ENCODE measurements at regions of chr11 and their contacts with region 1.

Region 1: DNA sequence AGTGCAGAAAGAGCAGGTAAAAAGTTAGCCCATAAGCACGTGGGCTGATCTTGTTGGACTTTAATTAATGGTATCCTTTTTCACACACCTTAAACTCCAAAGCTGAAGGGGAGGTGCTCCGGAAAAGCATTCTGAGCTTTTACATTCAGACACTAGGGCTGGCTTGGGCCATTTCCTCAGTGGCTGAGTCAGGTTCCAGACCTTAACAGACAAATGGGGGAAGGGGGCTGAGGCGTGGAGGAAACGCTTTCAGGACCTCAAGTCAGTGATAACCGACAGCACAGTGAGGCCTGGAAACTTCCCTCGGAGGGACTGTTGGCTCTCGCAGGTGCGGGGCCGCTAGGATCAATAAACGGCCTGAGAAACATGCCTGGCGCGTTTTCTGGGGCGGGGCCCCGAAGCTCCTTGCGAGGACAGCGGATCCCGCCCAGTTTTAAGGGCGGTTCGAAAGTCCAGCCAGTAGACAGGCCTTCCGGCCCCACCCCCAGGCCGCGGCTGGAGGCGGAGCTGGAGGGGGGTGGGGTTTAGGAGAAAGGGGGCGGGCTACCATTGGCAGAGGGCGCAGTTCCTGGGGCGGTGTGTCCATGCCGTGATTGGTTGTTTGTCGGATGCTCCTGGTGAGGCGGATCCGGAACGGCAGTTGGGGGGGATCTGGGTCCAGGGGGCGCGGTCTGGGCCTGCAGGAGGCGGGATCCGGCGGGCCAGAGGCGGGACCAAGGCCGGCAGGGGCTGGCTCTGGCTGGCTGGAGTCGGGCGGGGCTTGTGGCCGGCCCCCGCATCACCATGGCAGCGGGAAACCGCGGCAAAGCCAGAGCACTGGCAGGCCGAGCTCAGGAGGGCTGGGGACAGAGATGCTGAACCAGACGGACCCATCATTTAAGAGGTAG is 8.0 kb downstream of the C11orf52 start:
- DNase-seq: peak; percentile 99
- CTCF ChIP-seq: no peak

Region 2: GRCh38 chr11:111911563-111912401 is 15.0 kb before region 1 on chr11 and contains the start of gene CRYAB:
- CTCF ChIA-PET with region 1: interaction called, 16 read pairs
- POLR2A ChIA-PET with region 1: no interaction called
- DNase-seq: no peak
- CTCF ChIP-seq: no peak

Region 3: DNA sequence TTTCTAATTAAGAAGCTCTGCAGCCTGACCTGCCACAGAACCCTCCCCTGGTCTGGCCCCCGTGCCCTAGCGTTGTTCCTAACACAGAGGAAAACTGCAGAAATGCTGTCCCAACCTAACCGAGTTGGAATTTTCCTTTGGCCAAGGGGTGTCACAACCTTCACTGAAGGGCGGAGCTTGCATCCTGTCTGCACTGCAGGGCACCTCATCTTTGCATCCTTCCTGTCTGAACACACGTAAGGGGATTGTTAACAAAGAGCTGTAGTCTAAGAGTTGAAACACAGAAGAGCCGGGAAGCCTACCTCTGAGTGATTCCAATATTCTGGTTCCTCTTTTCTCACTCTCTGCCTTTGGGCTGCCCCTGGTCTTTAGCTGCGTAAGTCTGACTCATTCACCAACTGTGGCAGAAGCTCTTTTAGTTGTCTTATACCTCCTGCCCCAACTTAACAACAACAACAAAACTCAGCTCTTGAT is 12.0 kb after region 1 on chr11:
- CTCF ChIA-PET with region 1: interaction called, 38 read pairs
- POLR2A ChIA-PET with region 1: interaction called, 4 read pairs
- DNase-seq: peak; percentile 69
- CTCF ChIP-seq: no peak

Region 4: DNA sequence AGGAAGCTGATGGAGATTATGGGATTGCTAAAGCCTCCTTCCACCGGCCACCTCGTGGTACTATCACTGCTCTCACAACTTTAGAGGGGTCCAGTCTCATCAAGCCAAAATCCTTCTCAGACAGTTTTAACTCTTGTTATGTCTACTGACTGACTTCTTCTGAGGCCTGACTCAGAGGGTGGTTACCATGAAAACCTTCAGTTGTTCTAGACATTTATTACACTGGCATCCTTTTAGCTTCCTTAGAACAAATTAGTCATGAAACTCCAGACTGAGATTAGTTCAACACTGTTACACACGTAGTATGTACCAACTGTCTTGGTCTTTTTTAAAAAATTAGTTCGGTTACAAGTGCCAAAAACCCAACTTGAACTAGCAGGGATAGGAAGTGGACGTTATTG is 17.9 kb after region 1 on chr11:
- CTCF ChIA-PET with region 1: interaction called, 38 read pairs
- POLR2A ChIA-PET with region 1: interaction called, 3 read pairs
- DNase-seq: no peak
- CTCF ChIP-seq: no peak

Region 5: DNA sequence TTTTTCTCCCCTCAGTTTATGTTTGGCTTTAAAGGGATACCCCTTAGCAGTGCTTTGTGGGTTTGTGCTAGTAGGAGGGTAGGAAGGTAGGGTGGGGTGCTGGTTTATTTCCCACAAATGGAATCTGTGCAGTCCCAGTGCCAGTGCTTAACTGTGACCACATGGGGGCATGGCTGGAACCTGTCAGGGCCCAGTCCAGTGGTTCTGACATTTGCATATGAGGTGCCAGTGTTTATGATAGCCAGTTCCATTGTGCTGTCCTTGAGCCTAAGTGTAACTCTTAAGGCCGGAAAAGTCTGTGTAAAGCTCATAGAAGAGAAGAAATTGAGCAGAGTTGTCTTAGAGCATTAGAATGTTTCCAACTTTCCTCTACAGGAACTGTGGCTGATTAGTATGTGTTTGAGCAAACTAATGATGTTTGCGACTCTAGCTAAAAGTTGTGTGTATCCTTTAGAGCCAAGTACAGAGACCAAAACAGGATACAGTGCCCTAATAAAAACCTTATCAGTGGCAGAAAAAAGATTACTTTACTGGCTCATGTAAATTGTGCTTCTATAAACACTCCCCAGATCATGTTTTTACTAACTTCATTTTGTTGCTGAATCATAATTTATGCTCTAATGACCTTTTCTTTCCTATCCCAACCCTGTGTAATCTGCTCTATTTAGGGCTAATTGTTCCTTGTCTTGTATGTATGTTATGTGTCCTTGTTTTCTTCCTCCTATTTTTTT is 48.5 kb after region 1 on chr11:
- CTCF ChIA-PET with region 1: interaction called, 138 read pairs
- POLR2A ChIA-PET with region 1: no interaction called
- DNase-seq: no peak
- CTCF ChIP-seq: no peak